ENCODE measurements at regions of chr5 and their contacts with region 1.

Region 1: GRCh38 chr5:40428126-40428525 is 251.6 kb upstream of the PTGER4 start:
- DNase-seq: peak; percentile 74
- H3K4me3 Mint-ChIP-seq: no peak overlapping the region
- H3K27ac Mint-ChIP-seq: no peak overlapping the region
- H3K4me1 Mint-ChIP-seq: peaks cover 19% of the 10 kb centered on the region
- H3K27me3 Mint-ChIP-seq: no peaks in the 10 kb centered on the region
- CTCF ChIP-seq: no peak

Region 2: GRCh38 chr5:40400245-40400644 is 27.9 kb before region 1 on chr5:
- CTCF ChIA-PET with region 1: no interaction called
- POLR2A ChIA-PET with region 1: no interaction called
- intact Hi-C with region 1: no loop called
- DNase-seq: no peak
- H3K4me3 Mint-ChIP-seq: no peak overlapping the region
- H3K27ac Mint-ChIP-seq: no peak overlapping the region
- H3K4me1 Mint-ChIP-seq: peaks cover 22% of the 10 kb centered on the region
- H3K27me3 Mint-ChIP-seq: no peaks in the 10 kb centered on the region
- CTCF ChIP-seq: no peak

Region 3: GRCh38 chr5:40410231-40410861 is 17.8 kb before region 1 on chr5:
- CTCF ChIA-PET with region 1: interaction called, 3 read pairs
- POLR2A ChIA-PET with region 1: interaction called, 48 read pairs
- intact Hi-C with region 1: no loop called
- DNase-seq: peak; percentile 53
- H3K4me3 Mint-ChIP-seq: peak overlapping the region; percentile 41
- H3K27ac Mint-ChIP-seq: peak overlapping the region; percentile 59
- H3K4me1 Mint-ChIP-seq: peaks cover 27% of the 10 kb centered on the region
- H3K27me3 Mint-ChIP-seq: no peaks in the 10 kb centered on the region
- CTCF ChIP-seq: no peak

Region 4: DNA sequence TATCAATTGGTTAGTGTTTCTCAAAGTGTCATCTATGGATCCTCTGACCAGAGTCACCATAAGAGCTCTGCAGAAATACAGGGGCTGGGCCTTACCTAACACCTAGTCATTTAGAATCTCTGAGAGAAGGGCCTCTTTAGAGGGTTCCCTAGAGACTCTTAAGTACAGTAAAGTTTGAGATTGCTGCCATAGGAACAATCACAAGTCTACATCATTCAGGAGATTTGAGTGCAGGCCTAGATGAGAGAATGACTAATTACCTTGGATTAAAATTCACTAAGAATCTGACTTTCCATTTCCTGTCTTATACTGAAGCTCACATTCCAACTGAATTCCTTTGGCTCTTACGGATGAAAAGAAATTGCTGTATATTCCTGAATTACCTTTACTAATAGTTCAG is 69.4 kb after region 1 on chr5:
- CTCF ChIA-PET with region 1: no interaction called
- POLR2A ChIA-PET with region 1: no interaction called
- intact Hi-C with region 1: no loop called
- DNase-seq: no peak
- H3K4me3 Mint-ChIP-seq: no peak overlapping the region
- H3K27ac Mint-ChIP-seq: no peak overlapping the region
- H3K4me1 Mint-ChIP-seq: no peaks in the 10 kb centered on the region
- H3K27me3 Mint-ChIP-seq: no peaks in the 10 kb centered on the region
- CTCF ChIP-seq: no peak